Activated T-helper 1 cell treated with anti-CD3 and anti-CD28 coated beads, Interleukin-12 subunit alpha, Interleukin-12 subunit beta, Interleukin-2, Interleukin-4 antibody, amounts not matched to agents 30 ng/mL and 10 ng/mL and 1 ng/mL, durations not matched to agents 14 hours and 24 hours and 36 hours (primary cell): ENCODE measurements at regions of chr1 and their contacts with region 1.

Region 1: DNA sequence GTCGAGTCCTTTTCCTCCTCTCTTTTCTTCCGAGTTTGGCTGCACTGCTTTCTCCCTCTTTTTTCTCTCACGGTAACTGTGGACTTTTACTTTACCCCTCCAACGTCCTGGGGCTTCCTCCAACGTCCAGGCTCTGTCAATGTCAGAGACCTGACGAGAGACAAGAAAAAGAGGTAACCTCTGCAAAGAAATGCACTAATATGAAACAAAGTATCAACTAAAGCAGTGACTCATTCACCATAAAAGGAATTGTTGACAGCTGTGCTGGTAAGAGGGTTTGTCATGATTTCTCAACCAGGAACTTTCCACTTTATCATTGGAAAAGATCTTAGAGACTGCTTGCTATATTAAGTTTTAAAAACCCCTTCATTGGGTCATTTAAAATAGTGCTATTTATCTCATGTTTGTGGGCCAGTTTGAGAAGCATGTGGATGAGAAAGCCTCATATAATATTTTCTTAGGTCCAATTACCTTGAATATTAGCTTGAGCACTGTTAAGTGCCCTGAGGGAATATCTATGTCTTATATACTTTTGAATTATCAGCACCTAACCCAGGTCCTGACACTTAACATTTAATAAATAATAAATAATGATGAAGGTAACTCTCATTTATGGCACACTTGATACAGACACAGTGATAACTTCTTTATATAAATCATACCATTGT is at the start of gene GBP2:
- DNase-seq: peak; percentile 32
- H3K4me3 Mint-ChIP-seq: peak within 1 kb of the TSS; percentile 95
- H3K27ac Mint-ChIP-seq: peak within 1 kb of the TSS; percentile 97
- H3K4me1 Mint-ChIP-seq: peaks cover 65% of the 10 kb centered on the region
- H3K27me3 Mint-ChIP-seq: no peaks in the 10 kb centered on the region
- total RNA-seq, gene GBP2: 225 and 229 TPM in 2 replicates

Region 2: GRCh38 chr1:88683541-88684481 is 442.2 kb before region 1 on chr1 and contains the start of gene PKN2:
- intact Hi-C with region 1: loop called (anchors 2 kb)
- DNase-seq: peak; percentile 97
- H3K4me3 Mint-ChIP-seq: peak within 1 kb of the TSS; percentile 100
- H3K27ac Mint-ChIP-seq: peak within 1 kb of the TSS; percentile 100
- H3K4me1 Mint-ChIP-seq: peaks cover 35% of the 10 kb centered on the region
- H3K27me3 Mint-ChIP-seq: peaks cover 5% of the 10 kb centered on the region
- total RNA-seq, gene PKN2: 23.8 and 26.0 TPM in 2 replicates

Region 3: GRCh38 chr1:89065079-89065868 is 60.8 kb before region 1 on chr1 and contains the start of gene GBP1:
- intact Hi-C with region 1: loop called (anchors 2 kb)
- DNase-seq: no peak
- H3K4me3 Mint-ChIP-seq: peak within 1 kb of the TSS; percentile 91
- H3K27ac Mint-ChIP-seq: peak within 1 kb of the TSS; percentile 85
- H3K4me1 Mint-ChIP-seq: peaks cover 77% of the 10 kb centered on the region
- H3K27me3 Mint-ChIP-seq: no peaks in the 10 kb centered on the region
- total RNA-seq, gene GBP1: 39.1 and 39.5 TPM in 2 replicates

Region 4: GRCh38 chr1:89259283-89259971 is 133.4 kb after region 1 on chr1:
- intact Hi-C with region 1: loop called (anchors 1 kb)
- DNase-seq: peak; percentile 43
- H3K4me3 Mint-ChIP-seq: peak overlapping the region; percentile 76
- H3K27ac Mint-ChIP-seq: peak overlapping the region; percentile 94
- H3K4me1 Mint-ChIP-seq: peaks cover 76% of the 10 kb centered on the region
- H3K27me3 Mint-ChIP-seq: no peaks in the 10 kb centered on the region

Region 5: GRCh38 chr1:89298461-89298860 is 172.4 kb after region 1 on chr1:
- intact Hi-C with region 1: loop called (anchors 1 kb)
- DNase-seq: no peak
- H3K4me3 Mint-ChIP-seq: peak overlapping the region; percentile 37
- H3K27ac Mint-ChIP-seq: peak overlapping the region; percentile 75
- H3K4me1 Mint-ChIP-seq: peaks cover 81% of the 10 kb centered on the region
- H3K27me3 Mint-ChIP-seq: no peaks in the 10 kb centered on the region

Region 6: GRCh38 chr1:89545264-89546038 is 419.4 kb after region 1 on chr1:
- intact Hi-C with region 1: loop called (anchors 2 kb)
- DNase-seq: peak; percentile 39
- H3K4me3 Mint-ChIP-seq: peak overlapping the region; percentile 12
- H3K27ac Mint-ChIP-seq: peak overlapping the region; percentile 90
- H3K4me1 Mint-ChIP-seq: peaks cover 85% of the 10 kb centered on the region
- H3K27me3 Mint-ChIP-seq: peaks cover 2% of the 10 kb centered on the region